ENCODE measurements at regions of chr1 and their contacts with region 1.

Region 1: DNA sequence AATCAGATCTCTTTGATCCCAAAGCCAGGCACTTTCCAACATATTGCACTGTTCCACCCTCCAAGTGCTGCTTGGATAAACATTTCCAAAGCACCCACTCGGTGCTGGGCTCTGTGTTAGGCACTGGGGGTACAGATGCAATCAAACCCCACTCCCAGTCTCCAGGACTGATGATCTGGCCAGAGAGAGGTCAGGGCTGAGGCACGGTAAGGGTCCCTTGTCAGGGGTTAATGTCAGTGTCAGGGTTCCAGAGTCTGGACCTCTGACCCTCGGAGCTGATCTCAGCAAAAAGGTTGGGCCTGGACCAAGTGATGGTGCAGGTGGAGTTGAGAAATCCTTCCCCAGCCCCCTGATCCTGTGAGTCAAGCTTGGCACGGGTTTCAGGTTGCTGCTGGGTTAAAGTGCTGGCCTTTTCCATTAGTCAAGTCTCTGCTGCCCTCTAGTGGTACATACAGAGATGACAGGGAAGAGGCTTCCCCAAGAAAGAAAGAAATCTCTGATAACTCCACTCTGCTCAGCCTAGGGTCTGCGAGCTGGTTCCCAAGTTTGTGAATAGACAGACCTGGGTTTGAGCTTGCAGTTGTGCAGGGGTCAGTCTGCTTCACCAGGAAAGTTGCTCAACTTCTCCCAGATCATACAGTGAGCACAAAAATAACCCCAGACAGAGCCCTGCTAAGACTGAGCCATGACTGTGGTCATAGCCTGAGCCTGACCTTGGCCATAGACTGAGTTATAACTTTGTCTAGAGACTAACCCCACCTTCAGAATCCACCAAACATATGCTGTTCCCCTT is 74.6 kb downstream of the DMRTA2 start:
- DNase-seq: peak; percentile 54 to 58
- H3K4me3 ChIP-seq: no peak overlapping the region
- H3K4me3 Mint-ChIP-seq: no peak overlapping the region
- H3K27ac Mint-ChIP-seq: no peak overlapping the region
- H3K4me1 ChIP-seq: no peaks in the 10 kb centered on the region
- H3K4me1 Mint-ChIP-seq: no peaks in the 10 kb centered on the region
- H3K27me3 ChIP-seq: no peaks in the 10 kb centered on the region
- H3K27me3 Mint-ChIP-seq: peaks cover 13% of the 10 kb centered on the region
- CTCF ChIP-seq: peak; percentile 72 to 76

Region 2: GRCh38 chr1:48916130-48917069 is 1432.2 kb before region 1 on chr1:
- CTCF ChIA-PET with region 1: no interaction called
- POLR2A ChIA-PET with region 1: no interaction called
- intact Hi-C with region 1: loop called (anchors 1 kb)
- DNase-seq: peak; percentile 37 to 43
- H3K4me3 ChIP-seq: no peak overlapping the region
- H3K4me3 Mint-ChIP-seq: no peak overlapping the region
- H3K27ac Mint-ChIP-seq: peak overlapping the region; percentile 53
- H3K4me1 ChIP-seq: peaks cover 6% of the 10 kb centered on the region; the same call in 1 of the 2 replicates
- H3K4me1 Mint-ChIP-seq: no peaks in the 10 kb centered on the region
- H3K27me3 ChIP-seq: no peaks in the 10 kb centered on the region
- H3K27me3 Mint-ChIP-seq: no peaks in the 10 kb centered on the region
- CTCF ChIP-seq: peak in 1 of 2 experiments; percentile 59

Region 3: DNA sequence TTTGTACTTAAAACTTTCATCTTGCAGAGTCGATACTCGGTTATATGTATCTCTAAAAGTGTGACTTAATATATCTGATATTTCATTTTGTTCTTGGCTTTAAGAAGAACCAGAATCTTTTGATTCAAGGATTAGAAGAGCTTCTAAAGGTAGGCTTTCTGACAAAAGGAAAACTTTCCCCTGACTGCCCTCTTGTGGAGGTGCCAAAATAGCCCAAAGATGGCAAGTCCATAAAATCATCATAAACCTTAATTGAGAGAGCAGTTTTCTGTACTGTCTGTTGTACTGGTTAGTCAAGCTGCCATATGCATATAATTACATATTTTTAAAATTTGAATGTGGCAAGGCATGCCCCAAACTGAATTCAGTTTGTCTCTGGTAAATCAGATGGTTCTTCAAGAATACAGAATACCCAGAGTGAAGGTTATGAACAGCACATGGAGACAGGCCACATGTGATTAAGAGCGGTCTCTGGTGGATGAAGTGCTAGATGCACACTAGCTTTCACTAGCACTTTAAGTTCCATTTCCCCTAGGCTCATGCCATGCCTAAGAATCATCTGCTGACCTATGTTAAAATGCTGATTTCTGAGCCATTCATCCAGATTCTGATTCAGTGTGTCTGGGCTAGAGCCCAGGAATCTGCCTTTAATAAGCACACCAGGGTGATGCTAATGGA is 267.6 kb before region 1 on chr1:
- CTCF ChIA-PET with region 1: no interaction called
- POLR2A ChIA-PET with region 1: no interaction called
- intact Hi-C with region 1: loop called (anchors 1 kb)
- DNase-seq: peak in 1 of 2 experiments; percentile 10
- H3K4me3 ChIP-seq: no peak overlapping the region
- H3K4me3 Mint-ChIP-seq: no peak overlapping the region
- H3K27ac Mint-ChIP-seq: no peak overlapping the region
- H3K4me1 ChIP-seq: no peaks in the 10 kb centered on the region
- H3K4me1 Mint-ChIP-seq: no peaks in the 10 kb centered on the region
- H3K27me3 ChIP-seq: no peaks in the 10 kb centered on the region
- H3K27me3 Mint-ChIP-seq: peaks cover 4% of the 10 kb centered on the region
- CTCF ChIP-seq: peak; percentile 30 to 44

Region 4: GRCh38 chr1:50329332-50329932 is 19.2 kb before region 1 on chr1:
- CTCF ChIA-PET with region 1: no interaction called
- POLR2A ChIA-PET with region 1: no interaction called
- intact Hi-C with region 1: loop called (anchors 2 kb)
- DNase-seq: no peak
- H3K4me3 ChIP-seq: no peak overlapping the region
- H3K4me3 Mint-ChIP-seq: no peak overlapping the region
- H3K27ac Mint-ChIP-seq: no peak overlapping the region
- H3K4me1 ChIP-seq: no peaks in the 10 kb centered on the region
- H3K4me1 Mint-ChIP-seq: no peaks in the 10 kb centered on the region
- H3K27me3 ChIP-seq: no peaks in the 10 kb centered on the region
- H3K27me3 Mint-ChIP-seq: peaks cover 14% of the 10 kb centered on the region
- CTCF ChIP-seq: peak in 1 of 2 experiments; percentile 14

Region 5: GRCh38 chr1:50368179-50369012 is 19.8 kb after region 1 on chr1:
- CTCF ChIA-PET with region 1: no interaction called
- POLR2A ChIA-PET with region 1: no interaction called
- intact Hi-C with region 1: no loop called
- DNase-seq: peak in 1 of 2 experiments; percentile 62
- H3K4me3 ChIP-seq: no peak overlapping the region
- H3K4me3 Mint-ChIP-seq: no peak overlapping the region
- H3K27ac Mint-ChIP-seq: no peak overlapping the region
- H3K4me1 ChIP-seq: no peaks in the 10 kb centered on the region
- H3K4me1 Mint-ChIP-seq: no peaks in the 10 kb centered on the region
- H3K27me3 ChIP-seq: no peaks in the 10 kb centered on the region
- H3K27me3 Mint-ChIP-seq: peaks cover 13% of the 10 kb centered on the region
- CTCF ChIP-seq: peak; percentile 57 to 90

Region 6: DNA sequence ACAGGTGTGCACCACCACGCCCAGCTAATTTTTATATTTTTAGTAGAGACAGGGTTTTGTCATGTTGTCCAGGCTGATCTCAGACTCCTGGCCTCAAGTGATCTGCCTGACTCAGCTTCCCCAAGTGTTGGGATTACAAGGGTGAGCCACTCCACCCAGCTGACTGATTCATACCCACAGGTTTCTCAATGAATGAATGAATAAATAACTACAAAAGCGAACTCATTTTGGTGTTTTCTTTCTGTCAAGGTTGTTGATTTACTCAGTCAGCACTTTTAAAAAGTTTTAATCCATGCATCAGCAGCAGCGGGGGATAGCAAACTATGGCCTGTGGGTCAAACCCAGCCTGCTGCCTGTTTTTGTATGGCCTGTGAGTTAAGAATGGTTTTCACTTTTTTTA is 393.9 kb after region 1 on chr1:
- CTCF ChIA-PET with region 1: no interaction called
- POLR2A ChIA-PET with region 1: no interaction called
- intact Hi-C with region 1: no loop called
- DNase-seq: no peak
- H3K4me3 ChIP-seq: no peak overlapping the region
- H3K4me3 Mint-ChIP-seq: no peak overlapping the region
- H3K27ac Mint-ChIP-seq: no peak overlapping the region
- H3K4me1 ChIP-seq: no peaks in the 10 kb centered on the region
- H3K4me1 Mint-ChIP-seq: no peaks in the 10 kb centered on the region
- H3K27me3 ChIP-seq: no peaks in the 10 kb centered on the region
- H3K27me3 Mint-ChIP-seq: no peaks in the 10 kb centered on the region
- CTCF ChIP-seq: no peak

Measured in Caco-2 (cell line).